Activated CD4-positive, alpha-beta T cell treated with anti-CD3 and anti-CD28 coated beads, Interleukin-2, amount 10 ng/mL, durations not matched to agents 7 days and 5 days (primary cell): ENCODE measurements at regions of chr19 and their contacts with region 1.

Region 1: GRCh38 chr19:39336483-39336882 is 640 bp upstream of the GMFG start:
- DNase-seq: no peak
- H3K4me3 Mint-ChIP-seq: peak overlapping the region; percentile 99
- H3K27ac Mint-ChIP-seq: peak overlapping the region; percentile 97
- H3K4me1 Mint-ChIP-seq: peaks cover 61% of the 10 kb centered on the region
- H3K27me3 Mint-ChIP-seq: no peaks in the 10 kb centered on the region

Region 2: DNA sequence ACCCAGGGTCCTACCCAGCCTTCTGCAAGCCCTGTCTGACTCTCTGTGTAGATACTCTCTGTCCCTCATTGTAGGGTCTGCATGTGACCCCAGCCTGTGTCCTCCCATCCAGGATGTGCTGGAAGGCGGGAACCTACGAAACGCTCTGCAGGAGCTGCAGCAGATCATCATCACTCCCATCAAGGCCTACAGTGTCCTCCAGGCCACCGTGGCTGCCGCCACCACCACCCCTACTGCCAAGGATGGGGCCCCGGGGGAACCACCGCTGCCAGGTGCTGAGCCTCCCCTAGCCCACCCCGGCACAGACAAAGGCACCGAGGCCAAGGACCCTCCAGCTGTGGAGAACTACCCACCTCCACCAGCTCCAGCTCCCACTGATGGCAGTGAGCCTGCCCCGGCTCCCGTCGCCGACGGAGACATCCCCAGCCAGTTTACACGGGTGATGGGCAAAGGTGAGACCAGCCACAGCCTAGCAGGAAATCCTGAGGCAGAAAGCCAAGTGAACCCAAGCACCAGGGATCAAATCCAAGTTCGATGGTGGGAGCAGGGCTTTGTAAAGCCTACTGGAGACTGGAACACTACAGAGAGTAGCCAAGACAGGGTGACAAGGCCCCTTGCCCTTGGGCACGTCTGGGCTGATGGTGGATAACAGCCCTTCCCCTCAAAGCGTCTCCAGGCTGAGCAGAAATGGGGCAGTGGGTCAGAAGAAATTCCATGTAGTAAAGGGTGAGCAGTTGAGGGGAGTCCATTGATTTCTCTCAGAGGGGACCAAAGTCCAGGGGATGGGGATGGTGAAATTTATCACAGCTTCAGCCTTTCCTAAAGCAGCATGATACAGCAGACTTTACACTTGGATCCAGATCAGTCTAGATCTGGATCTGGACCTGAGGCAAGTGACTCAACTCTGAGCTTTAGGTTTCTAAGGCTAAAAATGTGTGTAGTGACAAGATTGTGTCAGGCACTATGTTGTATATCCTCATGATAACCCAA is 41.2 kb after region 1 on chr19:
- CTCF ChIA-PET with region 1: no interaction called
- POLR2A ChIA-PET with region 1: interaction called, 16 read pairs
- DNase-seq: no peak
- H3K4me3 Mint-ChIP-seq: no peak overlapping the region
- H3K27ac Mint-ChIP-seq: no peak overlapping the region
- H3K4me1 Mint-ChIP-seq: no peaks in the 10 kb centered on the region
- H3K27me3 Mint-ChIP-seq: no peaks in the 10 kb centered on the region